ENCODE measurements at regions of chr11 and their contacts with region 1.

Region 1: GRCh38 chr11:35352077-35352888 is 67.1 kb downstream of the SLC1A2 start:
- DNase-seq: no peak

Region 2: DNA sequence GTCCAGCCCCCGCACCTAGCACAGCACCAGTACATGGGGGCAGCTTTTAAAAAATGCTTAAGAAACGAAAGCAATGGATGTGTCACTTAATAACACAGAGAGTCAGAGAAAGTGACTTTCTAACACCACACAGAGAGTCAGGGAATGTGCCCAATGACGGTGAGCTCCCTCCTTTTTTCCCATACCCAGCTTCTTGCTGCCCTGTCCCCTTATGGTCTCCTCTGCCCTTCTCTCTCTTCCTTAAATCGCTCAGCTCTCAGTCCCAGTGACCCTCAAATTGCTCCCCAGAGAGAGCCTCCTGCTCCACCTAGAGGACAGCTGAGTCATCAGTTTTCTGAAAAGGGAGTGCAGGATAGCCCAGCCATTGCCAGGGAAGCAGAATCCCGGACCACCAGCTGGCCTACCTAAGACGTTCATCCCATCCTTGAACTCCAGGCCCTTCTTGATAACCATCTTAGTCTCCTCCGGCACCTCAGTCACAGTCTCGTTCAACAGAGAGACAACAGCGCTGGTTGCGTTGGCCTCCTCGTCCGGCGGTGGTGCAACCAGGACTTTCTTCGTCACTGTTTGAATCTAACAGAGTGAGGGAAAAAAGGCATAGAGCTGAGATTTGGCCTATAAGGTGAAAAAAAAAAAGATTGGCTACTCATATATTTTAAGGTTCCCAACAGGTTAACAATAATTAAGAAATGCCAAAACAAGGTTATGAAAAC is 46.5 kb before region 1 on chr11:
- intact Hi-C with region 1: loop called (anchors 5 kb)
- DNase-seq: no peak

Region 3: GRCh38 chr11:35496416-35496815 is 144.1 kb after region 1 on chr11:
- intact Hi-C with region 1: no loop called
- DNase-seq: no peak